CD8-positive, alpha-beta T cell (primary cell): ENCODE measurements at regions of chr6 and their contacts with region 1.

Region 1: GRCh38 chr6:127464881-127465459 is 5.8 kb upstream of the KIAA0408 start:
- DNase-seq: peak; percentile 17 to 68 (median 50)
- ATAC-seq: peak; percentile 51
- H3K4me3 ChIP-seq: no peak overlapping the region
- H3K4me3 Mint-ChIP-seq: no peak overlapping the region
- H3K27ac ChIP-seq: no peak overlapping the region
- H3K27ac Mint-ChIP-seq: no peak overlapping the region
- H3K4me1 ChIP-seq: no peaks in the 10 kb centered on the region
- H3K4me1 Mint-ChIP-seq: no peaks in the 10 kb centered on the region
- H3K27me3 ChIP-seq: no peaks in the 10 kb centered on the region
- H3K27me3 Mint-ChIP-seq: no peaks in the 10 kb centered on the region
- CTCF ChIP-seq: peak; percentile 72

Region 2: GRCh38 chr6:127539272-127539671 is 74.3 kb after region 1 on chr6:
- CTCF ChIA-PET with region 1: interaction called, 44 read pairs
- POLR2A ChIA-PET with region 1: interaction called, 3 read pairs
- intact Hi-C with region 1: loop called (anchors 1 kb)
- DNase-seq: peak in 1 of 9 experiments; percentile 35
- ATAC-seq: peak; percentile 48
- H3K4me3 ChIP-seq: no peak overlapping the region
- H3K4me3 Mint-ChIP-seq: no peak overlapping the region
- H3K27ac ChIP-seq: no peak overlapping the region
- H3K27ac Mint-ChIP-seq: no peak overlapping the region
- H3K4me1 ChIP-seq: no peaks in the 10 kb centered on the region
- H3K4me1 Mint-ChIP-seq: no peaks in the 10 kb centered on the region
- H3K27me3 ChIP-seq: no peaks in the 10 kb centered on the region
- H3K27me3 Mint-ChIP-seq: peaks cover 17% of the 10 kb centered on the region
- CTCF ChIP-seq: peak; percentile 69